Naive thymus-derived CD8-positive, alpha-beta T cell (primary cell): ENCODE measurements at regions of chr22 and their contacts with region 1.

Region 1: GRCh38 chr22:38981992-38982927 is at the start of gene APOBEC3B:
- DNase-seq: peak in 9 of 10 donors; percentile 2 to 76 (median 36)
- ATAC-seq: peak; percentile 49 to 73
- H3K4me3 Mint-ChIP-seq: peak within 1 kb of the TSS; percentile 72 to 94 (median 84)
- H3K27ac Mint-ChIP-seq: peak within 1 kb of the TSS in 4 of 10 donors; percentile 53 to 90 (median 65)
- H3K4me1 Mint-ChIP-seq: peaks cover 9 to 32% (median 26%) of the 10 kb centered on the region in 4 donors
- H3K27me3 Mint-ChIP-seq: no peaks in the 10 kb centered on the region
- polyA plus RNA-seq, gene APOBEC3B: 0.14 TPM in 1 of 3 donors, not detected in the others

Region 2: DNA sequence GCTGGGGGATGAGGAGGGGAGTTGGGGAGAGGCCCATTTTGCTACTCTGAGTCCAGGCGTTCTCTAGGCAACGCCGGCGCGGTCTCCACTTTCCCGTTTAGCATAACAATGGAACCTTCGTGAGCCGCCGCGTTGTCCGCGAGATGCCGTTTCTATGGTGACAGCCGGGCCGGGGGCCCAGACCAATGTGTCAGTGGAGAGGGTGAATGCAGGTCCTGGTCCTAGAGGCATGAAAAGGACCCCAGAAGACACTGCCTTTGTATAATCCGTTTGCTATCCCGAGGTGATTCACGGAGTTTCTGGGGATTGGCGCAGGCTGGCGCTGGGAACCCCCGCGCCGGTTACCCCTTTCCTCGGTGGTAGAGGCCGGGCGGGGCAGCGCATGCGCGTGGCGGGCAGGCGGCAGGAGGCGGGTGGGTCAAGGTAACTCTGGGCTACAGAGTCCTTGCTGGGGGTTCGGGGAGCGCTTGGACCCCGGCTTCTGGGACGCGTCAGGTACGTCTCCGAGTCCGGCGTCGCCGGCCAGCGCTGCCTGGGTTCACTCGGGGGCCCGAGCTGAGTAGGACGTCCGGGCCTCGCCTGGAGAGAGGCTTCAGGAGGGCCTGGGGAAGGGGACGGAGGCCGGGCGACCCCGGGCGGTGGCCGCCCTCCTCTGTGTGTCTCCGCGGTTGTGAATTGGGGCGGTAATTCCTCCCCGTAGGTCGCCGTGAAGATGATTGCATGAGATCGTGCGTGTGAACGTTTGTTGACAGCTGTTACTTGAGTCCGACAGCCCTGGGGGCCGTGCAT is 325.8 kb before region 1 on chr22 and contains the starts of genes CBY1 and FAM227A:
- POLR2A ChIA-PET with region 1: no interaction called
- DNase-seq: peak; percentile 73 to 98 (median 87)
- ATAC-seq: peak; percentile 82 to 83
- H3K4me3 Mint-ChIP-seq: peak within 1 kb of the TSS; percentile 90 to 99 (median 96)
- H3K27ac Mint-ChIP-seq: peak within 1 kb of the TSS; percentile 93 to 100 (median 99)
- H3K4me1 Mint-ChIP-seq: peaks cover 6 to 23% (median 14%) of the 10 kb centered on the region in 4 donors
- H3K27me3 Mint-ChIP-seq: no peaks in the 10 kb centered on the region
- polyA plus RNA-seq, gene CBY1: 4.3 to 11.6 (median 11.2) TPM
- polyA plus RNA-seq, gene FAM227A: not detected

Region 3: DNA sequence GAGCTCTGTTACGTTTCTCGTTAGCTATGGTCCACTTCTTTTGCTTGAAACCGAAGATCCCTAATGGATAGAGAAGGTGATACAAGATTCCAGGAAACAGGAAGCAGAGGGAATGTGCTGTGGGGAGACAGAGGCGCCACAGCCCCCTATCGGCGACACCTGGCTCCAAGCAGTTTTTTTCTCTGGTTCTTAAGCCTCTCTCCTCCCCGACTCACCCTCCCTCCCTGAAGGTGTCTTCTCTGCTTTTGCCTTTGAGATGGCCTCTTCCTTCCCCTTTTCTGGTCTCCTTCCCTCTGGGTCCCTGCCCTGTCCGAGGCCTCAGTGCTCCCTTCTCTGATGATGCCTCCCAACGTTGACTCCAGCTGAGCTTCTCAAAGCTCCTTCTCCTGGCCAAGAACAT is 39.1 kb before region 1 on chr22:
- POLR2A ChIA-PET with region 1: no interaction called
- DNase-seq: peak in 1 of 10 donors; percentile 11
- ATAC-seq: no peak
- H3K4me3 Mint-ChIP-seq: peak overlapping the region in 5 of 10 donors; percentile 10 to 80 (median 22)
- H3K27ac Mint-ChIP-seq: no peak overlapping the region
- H3K4me1 Mint-ChIP-seq: peaks cover 14 to 36% (median 20%) of the 10 kb centered on the region in 4 donors
- H3K27me3 Mint-ChIP-seq: peaks cover 28 to 72% (median 57%) of the 10 kb centered on the region in 5 donors

Region 4: DNA sequence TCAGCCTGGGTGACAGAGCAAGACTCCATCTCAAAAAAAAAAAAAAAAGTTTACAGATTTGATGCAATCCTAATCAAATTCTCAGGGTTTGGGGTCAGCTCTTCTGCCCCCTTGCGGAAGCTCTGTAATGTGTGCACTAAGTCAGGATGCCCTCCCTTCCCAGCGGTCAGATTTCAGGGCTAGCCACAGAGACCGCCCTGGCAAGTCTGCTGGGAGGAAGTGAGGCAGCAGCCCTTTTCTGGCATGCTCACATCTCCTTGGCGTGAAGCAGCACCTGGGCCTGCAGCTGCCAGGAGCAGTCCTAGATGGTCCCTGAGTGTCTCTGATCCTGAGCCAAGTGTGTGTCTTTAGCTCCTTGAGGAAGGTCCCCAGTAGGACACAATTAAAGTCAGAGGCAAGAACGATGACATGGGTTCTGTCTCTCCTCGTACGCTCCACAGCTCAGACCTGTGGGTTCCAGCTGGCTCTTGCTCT is 20.9 kb after region 1 on chr22:
- POLR2A ChIA-PET with region 1: interaction called, 11 read pairs
- DNase-seq: peak; percentile 45 to 83 (median 67)
- ATAC-seq: peak; percentile 91 to 95
- H3K4me3 Mint-ChIP-seq: peak overlapping the region in 1 of 10 donors; percentile 14
- H3K27ac Mint-ChIP-seq: peak overlapping the region in 7 of 10 donors; percentile 0 to 75 (median 37)
- H3K4me1 Mint-ChIP-seq: peaks cover 5 to 18% (median 12%) of the 10 kb centered on the region in 4 donors
- H3K27me3 Mint-ChIP-seq: peaks cover 0 to 3% (median 0%) of the 10 kb centered on the region in 5 donors